Calu3 (cell line): ENCODE measurements at regions of chr22 and their contacts with region 1.

Region 1: DNA sequence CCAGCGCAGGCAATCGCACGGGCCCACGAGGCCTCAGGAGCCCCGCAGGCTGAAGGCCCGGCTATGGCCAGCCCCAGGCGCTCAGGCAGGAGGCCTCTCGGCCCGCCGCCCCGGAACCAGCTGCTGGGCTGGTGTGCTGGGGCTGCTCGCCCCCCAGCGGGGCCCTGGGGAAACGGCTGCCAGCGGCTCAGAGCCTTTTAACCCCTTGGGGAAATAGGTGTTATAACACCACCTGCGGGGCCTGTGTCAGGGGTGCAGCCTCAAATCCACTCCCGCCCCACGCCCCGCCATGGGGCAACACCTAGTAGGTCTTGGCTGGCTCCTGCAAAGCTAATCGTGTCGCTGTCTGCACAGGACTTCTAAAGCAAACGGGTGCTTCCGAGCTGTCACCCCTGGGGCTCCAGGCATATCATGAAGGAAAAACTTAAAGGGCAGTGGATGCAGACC is 237.4 kb downstream of the TTC28 start:
- DNase-seq: peak; percentile 81
- H3K4me3 Mint-ChIP-seq: peak overlapping the region; percentile 67
- H3K27ac Mint-ChIP-seq: no peak overlapping the region
- H3K4me1 Mint-ChIP-seq: peaks cover 8% of the 10 kb centered on the region
- H3K27me3 Mint-ChIP-seq: peaks cover 46% of the 10 kb centered on the region
- CTCF ChIP-seq: peak; percentile 79

Region 2: DNA sequence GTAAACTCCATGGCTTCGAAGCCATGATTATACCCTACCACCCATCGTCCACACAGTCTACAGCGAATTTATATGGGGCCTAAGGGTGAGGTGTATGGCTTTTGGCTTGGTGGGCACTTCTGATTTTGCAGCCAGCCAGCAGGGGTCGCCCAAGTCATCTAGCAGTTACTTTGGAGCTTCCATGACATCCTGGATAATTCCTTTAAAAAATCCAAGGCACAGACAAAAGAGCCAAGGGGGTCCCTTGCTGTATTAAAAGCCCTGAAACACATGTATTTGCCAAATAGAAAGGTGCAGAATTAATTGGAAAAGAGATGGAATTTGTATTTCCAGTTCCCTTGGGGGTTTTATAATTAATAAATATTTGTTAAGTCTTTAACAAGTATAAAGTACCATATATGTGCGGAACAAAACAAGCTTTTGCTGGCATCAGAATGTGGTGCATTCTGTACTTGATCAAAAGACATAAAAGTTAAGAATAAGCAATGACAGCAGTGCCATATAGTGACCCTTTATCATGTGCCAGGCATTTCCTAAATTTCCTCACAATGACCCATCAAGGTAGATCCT is 390.4 kb before region 1 on chr22:
- CTCF ChIA-PET with region 1: interaction called, 6 read pairs
- intact Hi-C with region 1: loop called (anchors 1 kb)
- DNase-seq: peak; percentile 77
- H3K4me3 Mint-ChIP-seq: no peak overlapping the region
- H3K27ac Mint-ChIP-seq: no peak overlapping the region
- H3K4me1 Mint-ChIP-seq: no peaks in the 10 kb centered on the region
- H3K27me3 Mint-ChIP-seq: peaks cover 53% of the 10 kb centered on the region
- CTCF ChIP-seq: peak; percentile 91

Region 3: DNA sequence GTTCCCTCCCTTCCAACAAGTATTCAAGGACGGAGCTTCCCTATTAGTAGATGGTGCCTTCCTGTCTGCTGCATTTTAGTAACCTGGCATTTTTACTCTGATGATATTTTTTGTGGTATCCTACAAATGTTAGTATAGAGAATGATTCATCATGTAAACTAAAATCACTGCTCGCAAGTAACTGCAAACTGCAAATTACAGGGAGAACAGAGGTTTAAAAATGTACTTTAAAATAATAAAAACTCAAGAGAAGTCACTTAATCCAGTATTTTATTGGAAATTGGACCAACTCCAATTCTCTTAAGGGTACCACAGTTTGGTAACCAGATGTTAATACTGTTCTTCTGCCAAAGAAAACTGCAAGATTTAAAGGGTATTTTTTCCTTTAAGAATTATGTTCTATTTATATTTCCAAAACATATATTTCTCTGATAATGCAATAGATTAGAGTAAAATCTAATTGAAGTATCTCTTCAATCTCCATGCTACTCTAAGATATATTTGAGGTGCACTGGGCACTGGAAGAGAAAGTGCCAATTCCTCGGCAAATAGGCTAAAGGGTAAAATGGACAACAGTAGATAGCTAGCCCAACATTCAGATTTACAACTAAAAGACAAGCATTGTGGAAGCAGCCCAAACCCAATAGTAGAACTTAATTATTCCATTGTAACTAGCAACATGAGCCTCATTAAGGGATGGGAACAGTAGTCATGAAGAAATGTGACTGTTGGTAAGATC is 60.7 kb before region 1 on chr22:
- CTCF ChIA-PET with region 1: no interaction called
- intact Hi-C with region 1: loop called (anchors 10 kb)
- DNase-seq: no peak
- H3K4me3 Mint-ChIP-seq: no peak overlapping the region
- H3K27ac Mint-ChIP-seq: no peak overlapping the region
- H3K4me1 Mint-ChIP-seq: no peaks in the 10 kb centered on the region
- H3K27me3 Mint-ChIP-seq: peaks cover 13% of the 10 kb centered on the region
- CTCF ChIP-seq: no peak

Region 4: GRCh38 chr22:28594797-28595462 is 152.6 kb after region 1 on chr22:
- CTCF ChIA-PET with region 1: no interaction called
- intact Hi-C with region 1: loop called (anchors 5 kb)
- DNase-seq: no peak
- H3K4me3 Mint-ChIP-seq: no peak overlapping the region
- H3K27ac Mint-ChIP-seq: no peak overlapping the region
- H3K4me1 Mint-ChIP-seq: peaks cover 11% of the 10 kb centered on the region
- H3K27me3 Mint-ChIP-seq: no peaks in the 10 kb centered on the region
- CTCF ChIP-seq: peak; percentile 47